ENCODE measurements at regions of chr11 and their contacts with region 1.

Region 1: DNA sequence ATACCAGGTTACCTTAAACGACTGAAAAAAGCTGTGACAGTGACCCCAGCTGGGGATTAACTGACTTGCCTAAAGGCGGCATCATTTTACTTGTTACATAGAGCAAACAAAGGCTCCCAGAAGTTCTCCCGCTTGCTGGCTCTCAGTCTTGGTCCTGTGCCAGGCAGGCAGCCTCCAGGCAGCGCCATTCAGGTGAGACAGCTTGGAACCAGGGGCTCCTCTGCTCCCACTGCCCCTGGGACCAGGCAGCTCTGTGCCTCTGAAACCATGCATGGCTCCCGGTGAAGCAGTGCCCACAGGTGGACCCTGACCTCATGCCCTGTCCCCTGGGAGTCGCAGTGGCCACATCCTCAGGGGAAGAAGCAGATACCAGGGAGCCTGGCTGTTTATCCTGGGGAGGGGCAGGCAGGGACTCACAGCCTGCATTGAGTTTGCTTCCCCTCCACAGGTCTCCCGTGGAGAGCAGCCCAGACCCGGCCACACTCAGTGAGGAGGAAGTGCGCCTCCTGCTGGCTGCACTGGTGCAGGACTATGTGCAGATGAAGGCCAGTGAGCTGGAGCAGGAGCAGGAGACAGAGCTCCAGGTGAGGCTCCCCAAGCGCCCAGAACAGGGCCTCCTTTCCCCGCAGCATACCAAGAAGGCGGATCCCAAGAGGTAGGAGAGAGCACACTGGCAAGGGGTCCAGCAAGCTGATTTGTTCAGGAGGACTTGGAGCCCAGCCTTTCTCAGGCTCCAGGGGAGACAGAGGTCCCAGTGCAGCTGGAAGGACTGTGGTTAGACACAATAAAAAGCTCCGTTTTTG is 15.6 kb upstream of the CYP2R1 start:
- DNase-seq: peak; percentile 89
- ATAC-seq: peak; percentile 58
- H3K4me3 Mint-ChIP-seq: peak overlapping the region; percentile 27; the same call in 1 of the 2 replicates
- H3K27ac Mint-ChIP-seq: no peak overlapping the region; the same call in 1 of the 2 replicates
- H3K4me1 Mint-ChIP-seq: peaks cover 18% of the 10 kb centered on the region
- H3K27me3 Mint-ChIP-seq: peaks cover 26% of the 10 kb centered on the region
- CTCF ChIP-seq: peak; percentile 92

Region 2: DNA sequence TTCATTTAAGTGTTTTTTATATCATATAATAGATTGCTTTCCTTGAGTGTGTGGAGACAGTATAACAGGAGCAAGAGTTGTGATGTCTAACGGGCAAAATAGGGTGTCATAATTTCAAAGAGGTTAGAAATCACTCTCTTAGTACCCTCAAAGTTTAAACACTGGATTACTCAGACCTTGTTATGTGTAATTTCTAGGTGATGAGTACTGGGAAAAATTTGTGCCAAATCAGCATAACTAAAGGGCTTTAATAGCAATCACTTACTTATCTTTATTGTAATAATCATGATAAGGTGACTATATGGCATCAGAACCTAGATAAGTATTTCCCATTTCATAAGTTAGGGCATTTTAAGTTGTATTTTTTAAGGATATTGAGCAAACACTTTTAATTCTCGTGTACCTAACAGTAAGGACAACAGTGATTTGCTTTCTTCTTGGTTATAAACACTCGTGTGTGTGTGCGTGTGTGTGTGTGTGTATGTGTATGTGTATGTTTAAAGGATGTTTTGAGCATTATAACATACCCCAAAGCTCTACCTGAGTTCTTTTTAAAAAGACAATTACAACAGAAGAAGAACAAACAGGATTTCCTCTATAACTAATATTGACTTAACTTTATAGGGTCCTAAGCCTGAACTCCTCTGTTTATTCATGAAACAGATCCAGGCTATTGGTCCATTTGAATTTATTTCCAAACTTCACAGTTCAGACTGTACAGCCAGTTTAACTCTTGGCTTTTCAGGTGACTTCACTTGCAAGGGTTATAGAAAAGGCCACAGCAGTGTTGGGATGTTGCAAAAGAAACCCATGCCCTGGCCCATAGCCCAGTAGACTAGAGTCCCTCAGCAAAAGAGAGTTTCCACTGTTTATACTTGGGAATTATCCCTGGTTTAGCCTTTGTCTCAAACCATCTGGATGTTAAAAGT is 287.7 kb before region 1 on chr11:
- CTCF ChIA-PET with region 1: interaction called, 181 read pairs
- POLR2A ChIA-PET with region 1: interaction called, 5 read pairs
- DNase-seq: no peak
- ATAC-seq: no peak
- H3K4me3 Mint-ChIP-seq: no peak overlapping the region
- H3K27ac Mint-ChIP-seq: no peak overlapping the region
- H3K4me1 Mint-ChIP-seq: no peaks in the 10 kb centered on the region
- H3K27me3 Mint-ChIP-seq: no peaks in the 10 kb centered on the region
- CTCF ChIP-seq: no peak

Region 3: DNA sequence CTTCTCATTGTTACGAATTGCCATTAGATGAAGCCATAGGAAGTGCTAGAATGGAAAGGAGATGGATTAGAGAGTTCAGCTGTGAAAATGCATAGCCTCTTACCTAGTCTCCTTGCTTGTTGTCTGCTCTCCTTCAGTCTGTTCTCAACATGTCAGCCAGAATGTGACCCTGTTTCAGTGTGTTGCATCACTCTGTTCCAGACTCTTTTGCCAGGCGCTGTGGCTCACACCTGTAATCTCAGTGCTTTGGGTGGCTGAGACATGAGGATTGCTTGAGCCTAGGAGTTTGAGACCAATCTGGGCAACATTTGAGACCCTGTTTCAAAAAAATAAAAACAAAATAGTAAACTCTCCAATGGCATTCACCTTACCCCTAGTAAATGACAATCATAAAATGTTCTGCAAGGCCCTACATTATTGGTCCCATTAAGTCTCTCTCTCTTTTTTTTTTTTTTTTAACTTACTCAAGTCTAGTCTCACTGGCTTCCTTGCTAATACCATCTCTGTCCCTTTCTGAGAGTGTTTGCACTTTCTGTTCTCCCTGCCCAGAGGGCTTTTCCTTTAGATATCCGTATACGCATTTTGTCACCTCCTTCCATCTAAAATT is 54.9 kb before region 1 on chr11:
- CTCF ChIA-PET with region 1: interaction called, 11 read pairs
- POLR2A ChIA-PET with region 1: no interaction called
- DNase-seq: no peak
- ATAC-seq: no peak
- H3K4me3 Mint-ChIP-seq: no peak overlapping the region
- H3K27ac Mint-ChIP-seq: no peak overlapping the region
- H3K4me1 Mint-ChIP-seq: no peaks in the 10 kb centered on the region
- H3K27me3 Mint-ChIP-seq: no peaks in the 10 kb centered on the region
- CTCF ChIP-seq: no peak

Region 4: DNA sequence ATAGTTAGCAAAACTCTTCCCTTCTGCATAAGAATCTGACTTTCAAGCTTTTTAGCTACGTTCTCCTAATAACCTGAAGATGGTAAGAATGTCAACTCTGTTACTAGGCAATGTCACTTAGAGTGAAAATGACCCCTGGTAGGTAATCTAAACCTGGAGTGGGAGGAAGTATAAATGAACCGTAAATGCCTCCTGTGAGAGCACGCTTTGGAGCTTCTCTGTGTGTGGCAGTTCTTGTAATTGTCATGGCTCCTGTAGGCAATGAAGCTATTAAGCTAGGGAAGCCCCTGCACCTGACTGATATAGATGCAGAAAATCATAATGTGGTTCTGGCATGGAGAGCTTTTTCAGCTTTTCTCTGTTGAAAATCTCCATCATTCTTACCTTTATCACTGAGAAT is 35.1 kb after region 1 on chr11:
- CTCF ChIA-PET with region 1: interaction called, 21 read pairs
- POLR2A ChIA-PET with region 1: no interaction called
- DNase-seq: no peak
- ATAC-seq: no peak
- H3K4me3 Mint-ChIP-seq: no peak overlapping the region
- H3K27ac Mint-ChIP-seq: no peak overlapping the region
- H3K4me1 Mint-ChIP-seq: no peaks in the 10 kb centered on the region; the same call in 1 of the 2 replicates
- H3K27me3 Mint-ChIP-seq: no peaks in the 10 kb centered on the region
- CTCF ChIP-seq: no peak

Region 5: GRCh38 chr11:15006139-15006759 is 98.6 kb after region 1 on chr11:
- CTCF ChIA-PET with region 1: interaction called, 115 read pairs
- POLR2A ChIA-PET with region 1: no interaction called
- DNase-seq: no peak
- ATAC-seq: peak; percentile 88
- H3K4me3 Mint-ChIP-seq: no peak overlapping the region
- H3K27ac Mint-ChIP-seq: no peak overlapping the region
- H3K4me1 Mint-ChIP-seq: no peaks in the 10 kb centered on the region
- H3K27me3 Mint-ChIP-seq: no peaks in the 10 kb centered on the region
- CTCF ChIP-seq: peak; percentile 20; the same call in 1 of the 2 replicates

Region 6: GRCh38 chr11:15091625-15092024 is 184.0 kb after region 1 on chr11:
- CTCF ChIA-PET with region 1: interaction called, 13 read pairs
- POLR2A ChIA-PET with region 1: no interaction called
- DNase-seq: no peak
- ATAC-seq: no peak
- H3K4me3 Mint-ChIP-seq: no peak overlapping the region
- H3K27ac Mint-ChIP-seq: no peak overlapping the region
- H3K4me1 Mint-ChIP-seq: peaks cover under 1% of the 10 kb centered on the region; the same call in 1 of the 2 replicates
- H3K27me3 Mint-ChIP-seq: no peaks in the 10 kb centered on the region
- CTCF ChIP-seq: no peak

Region 7: GRCh38 chr11:15216678-15217077 is 309.1 kb after region 1 on chr11:
- CTCF ChIA-PET with region 1: interaction called, 10 read pairs
- POLR2A ChIA-PET with region 1: no interaction called
- DNase-seq: peak; percentile 36
- ATAC-seq: peak; percentile 80
- H3K4me3 Mint-ChIP-seq: no peak overlapping the region
- H3K27ac Mint-ChIP-seq: no peak overlapping the region
- H3K4me1 Mint-ChIP-seq: peaks cover 5% of the 10 kb centered on the region; the same call in 1 of the 2 replicates
- H3K27me3 Mint-ChIP-seq: no peaks in the 10 kb centered on the region; the same call in 1 of the 2 replicates
- CTCF ChIP-seq: peak; percentile 56

Region 8: DNA sequence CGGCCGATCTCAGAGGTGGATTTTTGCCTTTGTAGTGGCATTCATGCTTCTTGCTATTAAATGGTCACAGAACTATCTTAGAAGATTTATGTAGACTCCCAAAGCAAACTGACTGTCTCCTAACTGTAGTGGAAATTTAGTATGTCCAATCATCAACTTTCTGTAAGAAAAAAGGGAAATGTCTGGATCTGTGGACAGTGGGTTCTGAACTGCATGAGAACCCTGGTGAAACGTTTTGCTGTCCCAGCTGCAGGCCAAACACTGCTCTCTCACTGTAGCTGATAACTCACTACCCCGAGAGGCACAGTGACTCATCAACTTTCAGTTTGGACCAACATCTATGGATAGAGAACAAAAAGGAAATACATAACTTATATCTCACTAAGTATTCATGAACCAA is 1061.7 kb after region 1 on chr11:
- CTCF ChIA-PET with region 1: no interaction called
- POLR2A ChIA-PET with region 1: no interaction called
- DNase-seq: no peak
- ATAC-seq: 0 out of 2 replicates have a peak, but pooled peaks have one; percentile 18
- H3K4me3 Mint-ChIP-seq: no peak overlapping the region
- H3K27ac Mint-ChIP-seq: no peak overlapping the region
- H3K4me1 Mint-ChIP-seq: peaks cover 14% of the 10 kb centered on the region
- H3K27me3 Mint-ChIP-seq: no peaks in the 10 kb centered on the region
- CTCF ChIP-seq: no peak

Measured in WTC11 (cell line).